CD4-positive, alpha-beta T cell (primary cell): ENCODE measurements at regions of chr2 and their contacts with region 1.

Region 1: GRCh38 chr2:113157118-113157896 is 16.5 kb upstream of the PSD4 start:
- DNase-seq: peak in 9 of 14 experiments; percentile 33 to 71 (median 55)
- ATAC-seq: peak; percentile 86
- H3K4me3 ChIP-seq: peak overlapping the region; percentile 79
- H3K4me3 Mint-ChIP-seq: peak overlapping the region; percentile 96
- H3K27ac ChIP-seq: peak overlapping the region in 1 of 2 donors; percentile 11
- H3K27ac Mint-ChIP-seq: peak overlapping the region; percentile 92
- H3K4me1 ChIP-seq: peaks cover 19% of the 10 kb centered on the region
- H3K4me1 Mint-ChIP-seq: peaks cover 41% of the 10 kb centered on the region
- H3K27me3 ChIP-seq: no peaks in the 10 kb centered on the region
- H3K27me3 Mint-ChIP-seq: no peaks in the 10 kb centered on the region
- CTCF ChIP-seq: no peak

Region 2: GRCh38 chr2:112920923-112921532 is 236.3 kb before region 1 on chr2:
- CTCF ChIA-PET with region 1: no interaction called
- POLR2A ChIA-PET with region 1: no interaction called
- intact Hi-C with region 1: no loop called
- DNase-seq: peak in 3 of 14 experiments; percentile 33 to 66 (median 49)
- ATAC-seq: peak; percentile 34
- H3K4me3 ChIP-seq: no peak overlapping the region
- H3K4me3 Mint-ChIP-seq: no peak overlapping the region
- H3K27ac ChIP-seq: no peak overlapping the region
- H3K27ac Mint-ChIP-seq: no peak overlapping the region
- H3K4me1 ChIP-seq: peaks cover 5% of the 10 kb centered on the region
- H3K4me1 Mint-ChIP-seq: peaks cover 9% of the 10 kb centered on the region
- H3K27me3 ChIP-seq: no peaks in the 10 kb centered on the region
- H3K27me3 Mint-ChIP-seq: no peaks in the 10 kb centered on the region
- CTCF ChIP-seq: no peak

Region 3: DNA sequence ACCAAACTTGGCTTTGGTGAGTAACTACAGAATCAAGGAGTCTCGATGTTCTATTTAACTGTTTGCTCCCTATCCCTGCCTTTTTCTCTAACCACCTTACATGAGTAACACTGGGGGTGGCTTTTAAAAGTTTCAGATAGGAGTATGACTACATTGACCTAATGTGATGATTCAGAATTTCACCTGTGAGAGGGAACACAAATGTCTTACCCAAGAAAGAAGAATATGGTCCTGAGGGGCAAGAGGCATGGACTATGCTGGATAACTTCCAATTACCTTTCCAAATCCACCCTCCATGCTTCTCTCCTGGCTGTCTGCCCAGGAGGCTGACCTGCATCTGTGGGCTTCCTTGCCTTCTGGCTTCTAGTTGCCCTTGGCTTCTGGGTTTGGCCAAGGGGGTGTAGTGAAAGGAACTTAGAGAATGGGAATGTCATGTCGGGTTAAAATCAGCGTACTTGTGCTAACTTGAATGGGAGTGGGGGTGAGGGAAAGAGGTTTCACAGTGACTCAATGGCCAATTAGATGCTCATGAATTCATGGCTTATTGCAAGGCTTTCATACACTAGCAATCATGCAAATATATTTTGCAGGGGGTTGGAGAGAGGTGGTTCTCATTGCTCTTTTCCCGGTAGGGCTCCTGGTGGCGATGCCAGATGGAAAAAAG is 184.8 kb before region 1 on chr2:
- CTCF ChIA-PET with region 1: no interaction called
- POLR2A ChIA-PET with region 1: no interaction called
- intact Hi-C with region 1: no loop called
- DNase-seq: no peak
- ATAC-seq: no peak
- H3K4me3 ChIP-seq: no peak overlapping the region
- H3K4me3 Mint-ChIP-seq: no peak overlapping the region
- H3K27ac ChIP-seq: no peak overlapping the region
- H3K27ac Mint-ChIP-seq: no peak overlapping the region
- H3K4me1 ChIP-seq: peaks cover 6% of the 10 kb centered on the region
- H3K4me1 Mint-ChIP-seq: peaks cover 19% of the 10 kb centered on the region
- H3K27me3 ChIP-seq: no peaks in the 10 kb centered on the region
- H3K27me3 Mint-ChIP-seq: no peaks in the 10 kb centered on the region
- CTCF ChIP-seq: no peak

Region 4: DNA sequence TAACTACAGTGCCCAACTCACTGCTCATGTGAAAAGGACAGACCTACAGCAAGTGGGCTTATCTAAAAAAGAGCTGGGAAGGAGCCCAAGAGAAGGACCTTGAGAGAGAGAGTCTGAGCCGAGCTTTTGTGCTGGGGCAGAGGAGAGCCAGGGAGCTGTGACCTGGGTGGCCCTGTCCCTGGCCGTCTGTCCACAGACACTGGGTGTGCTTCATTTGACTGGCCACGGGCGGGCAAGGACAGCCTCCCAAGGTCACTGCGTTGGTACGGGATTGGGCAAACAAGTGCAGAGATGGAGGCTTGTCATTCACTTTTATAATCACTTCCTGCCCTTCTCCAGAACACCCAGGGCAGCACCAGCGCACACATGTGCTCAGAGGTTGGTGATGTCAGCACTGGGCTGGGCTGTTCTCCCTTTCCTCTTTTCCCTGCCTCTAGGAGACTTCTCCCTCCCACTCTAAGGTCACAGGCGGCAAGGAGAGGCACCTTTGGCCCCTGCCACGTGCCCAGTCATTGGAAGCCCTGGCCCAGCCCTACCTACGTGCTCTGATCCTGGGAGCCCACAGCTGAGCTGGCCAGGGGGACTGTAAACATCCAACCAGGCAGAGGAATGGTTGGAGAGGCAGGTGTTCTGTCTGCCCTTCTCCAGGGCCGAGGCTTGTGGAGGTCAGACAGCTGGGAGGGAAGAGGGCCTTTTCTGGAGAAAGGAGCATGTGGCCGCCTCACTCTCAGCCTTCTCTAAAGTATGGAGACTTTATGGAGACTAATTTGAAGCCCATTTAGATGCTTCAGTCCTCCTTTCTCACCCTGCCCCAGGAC is 10.0 kb after region 1 on chr2:
- CTCF ChIA-PET with region 1: interaction called, 3 read pairs
- POLR2A ChIA-PET with region 1: interaction called, 27 read pairs
- intact Hi-C with region 1: no loop called
- DNase-seq: peak in 8 of 14 experiments; percentile 36 to 70 (median 59)
- ATAC-seq: peak; percentile 67
- H3K4me3 ChIP-seq: peak overlapping the region; percentile 17
- H3K4me3 Mint-ChIP-seq: peak overlapping the region; percentile 74
- H3K27ac ChIP-seq: peak overlapping the region; percentile 74 to 85
- H3K27ac Mint-ChIP-seq: peak overlapping the region; percentile 90
- H3K4me1 ChIP-seq: peaks cover 73% of the 10 kb centered on the region
- H3K4me1 Mint-ChIP-seq: peaks cover 73% of the 10 kb centered on the region
- H3K27me3 ChIP-seq: no peaks in the 10 kb centered on the region
- H3K27me3 Mint-ChIP-seq: no peaks in the 10 kb centered on the region
- CTCF ChIP-seq: no peak

Region 5: DNA sequence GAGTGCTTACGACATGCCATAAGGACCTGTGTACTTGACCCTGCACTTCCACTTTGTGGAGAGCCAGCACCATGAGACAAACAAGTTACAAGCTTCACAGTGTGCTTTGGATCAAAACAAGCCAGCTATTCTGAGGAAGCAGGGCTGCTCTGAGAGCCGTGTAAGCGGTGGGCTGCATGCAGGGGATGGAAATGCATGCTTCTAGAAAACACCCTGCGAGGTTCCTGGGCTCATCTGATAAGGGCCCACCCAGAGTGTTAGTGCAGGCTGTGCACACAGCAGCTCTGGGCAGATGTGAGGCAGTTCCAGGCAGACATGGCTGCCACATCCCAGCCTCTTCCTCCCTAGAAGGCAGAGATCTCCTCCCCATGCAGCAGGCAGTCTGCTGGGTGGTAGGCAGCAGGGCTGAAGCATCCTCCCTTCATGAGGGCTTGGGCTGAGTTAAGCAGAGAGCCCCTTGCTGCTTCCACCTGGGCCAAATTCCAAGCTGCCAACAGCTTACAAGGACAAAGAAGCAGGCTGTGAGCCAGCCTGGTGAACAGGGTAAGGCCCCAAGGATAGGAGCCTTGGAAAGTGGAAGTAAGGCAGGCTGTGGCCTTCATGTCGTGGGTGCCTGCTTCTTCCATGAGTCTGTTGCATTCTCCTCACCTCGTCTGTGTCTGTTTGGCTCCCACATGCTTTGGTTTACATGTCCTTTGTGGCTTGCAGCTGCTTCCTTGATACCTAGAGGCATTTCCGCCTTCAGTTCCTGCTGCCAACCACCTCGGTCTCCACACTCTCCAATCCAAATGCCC is 24.1 kb after region 1 on chr2:
- CTCF ChIA-PET with region 1: interaction called, 6 read pairs
- POLR2A ChIA-PET with region 1: interaction called, 91 read pairs
- intact Hi-C with region 1: no loop called
- DNase-seq: peak in 4 of 14 experiments; percentile 41 to 50 (median 42)
- ATAC-seq: peak; percentile 51
- H3K4me3 ChIP-seq: peak overlapping the region; percentile 26
- H3K4me3 Mint-ChIP-seq: peak overlapping the region; percentile 71
- H3K27ac ChIP-seq: peak overlapping the region; percentile 32 to 45
- H3K27ac Mint-ChIP-seq: peak overlapping the region; percentile 93
- H3K4me1 ChIP-seq: peaks cover 100% of the 10 kb centered on the region
- H3K4me1 Mint-ChIP-seq: peaks cover 93% of the 10 kb centered on the region
- H3K27me3 ChIP-seq: no peaks in the 10 kb centered on the region
- H3K27me3 Mint-ChIP-seq: no peaks in the 10 kb centered on the region
- CTCF ChIP-seq: no peak

Region 6: GRCh38 chr2:113198790-113199612 is 41.7 kb after region 1 on chr2:
- CTCF ChIA-PET with region 1: interaction called, 13 read pairs
- POLR2A ChIA-PET with region 1: interaction called, 4 read pairs
- intact Hi-C with region 1: no loop called
- DNase-seq: peak; percentile 53 to 87 (median 75)
- ATAC-seq: peak; percentile 71
- H3K4me3 ChIP-seq: no peak overlapping the region
- H3K4me3 Mint-ChIP-seq: no peak overlapping the region
- H3K27ac ChIP-seq: peak overlapping the region in 1 of 2 donors; percentile 5
- H3K27ac Mint-ChIP-seq: peak overlapping the region; percentile 12
- H3K4me1 ChIP-seq: peaks cover 9% of the 10 kb centered on the region
- H3K4me1 Mint-ChIP-seq: peaks cover 8% of the 10 kb centered on the region
- H3K27me3 ChIP-seq: no peaks in the 10 kb centered on the region
- H3K27me3 Mint-ChIP-seq: no peaks in the 10 kb centered on the region
- CTCF ChIP-seq: peak; percentile 91